GM23248 (cell line): ENCODE measurements at regions of chr6 and their contacts with region 1.

Region 1: DNA sequence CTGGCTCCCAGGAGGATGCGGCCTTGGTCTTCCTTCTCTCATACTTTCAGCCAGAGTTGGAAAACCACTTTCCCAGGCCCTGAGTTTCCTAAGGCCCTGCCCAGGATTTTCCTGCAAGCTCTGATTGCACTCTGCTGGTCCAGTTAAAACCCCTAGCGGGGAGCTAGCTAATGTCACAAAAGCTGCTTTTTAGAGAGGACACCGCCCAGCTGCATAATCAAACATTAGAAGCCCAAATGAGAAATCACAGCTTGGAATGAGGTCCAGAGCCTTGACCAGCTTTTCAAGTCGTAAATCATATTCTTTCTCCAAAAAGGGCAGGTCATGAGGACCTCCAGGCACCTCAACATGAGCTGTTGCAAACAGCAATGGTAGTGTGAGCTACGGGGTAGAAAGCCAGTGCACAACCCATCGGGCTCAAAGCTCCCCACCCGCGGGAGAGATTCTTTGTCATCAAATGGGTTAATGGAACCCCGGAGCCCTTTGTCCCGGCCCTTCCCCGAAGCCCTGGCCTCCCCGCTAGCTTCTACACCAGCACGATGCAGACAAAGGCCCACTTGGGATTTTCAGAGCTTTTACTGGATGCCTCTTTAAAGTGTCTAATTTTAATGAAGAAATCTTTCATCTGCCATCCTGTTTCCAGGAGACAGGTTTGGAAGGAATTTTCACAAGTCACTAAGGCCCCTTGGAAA is 134.0 kb downstream of the SCML4 start:
- DNase-seq: no peak
- H3K4me3 ChIP-seq: 0 out of 2 replicates have a peak overlapping the region, but pooled peaks have one; percentile 14
- H3K27ac ChIP-seq: peak overlapping the region; percentile 98
- H3K4me1 ChIP-seq: peaks cover 37% of the 10 kb centered on the region
- H3K27me3 ChIP-seq: no peaks in the 10 kb centered on the region

Region 2: GRCh38 chr6:107847844-107848802 is 158.0 kb after region 1 on chr6:
- in situ Hi-C with region 1: loop called (anchors 10 kb)
- DNase-seq: peak; percentile 86
- H3K4me3 ChIP-seq: peak overlapping the region; percentile 74
- H3K27ac ChIP-seq: no peak overlapping the region
- H3K4me1 ChIP-seq: no peaks in the 10 kb centered on the region
- H3K27me3 ChIP-seq: no peaks in the 10 kb centered on the region